Left ventricle myocardium inferior (tissue), 1 donor: ENCODE measurements at regions of chr7 and their contacts with region 1.

Region 1: DNA sequence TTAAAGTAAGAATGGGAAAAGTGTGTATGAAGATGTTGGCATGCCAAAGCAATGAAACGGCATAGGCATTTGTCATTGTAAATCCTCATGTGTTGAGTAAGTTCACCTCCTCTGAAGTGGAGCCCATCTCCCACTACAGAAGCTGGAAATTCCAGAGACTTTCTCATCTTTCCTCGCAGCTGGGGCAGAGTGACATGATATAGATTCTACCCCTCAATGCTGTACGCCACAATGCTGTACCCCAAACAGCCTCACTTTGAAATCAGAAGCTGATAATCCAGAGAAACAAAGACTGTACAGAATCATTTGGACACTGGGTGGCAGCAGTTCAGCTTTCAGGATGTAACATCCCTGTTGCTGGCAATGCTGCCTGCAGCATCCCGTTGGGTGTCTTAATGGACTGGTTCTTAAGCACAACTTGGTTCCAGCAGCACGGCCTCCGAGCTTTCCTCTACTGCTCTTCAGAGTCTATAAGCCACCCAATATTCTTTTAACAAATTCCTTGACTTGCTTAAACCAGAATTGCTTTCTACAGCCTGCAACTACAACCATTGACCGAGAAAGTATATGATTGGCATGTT is 18.8 kb downstream of the ZC3HAV1L start:
- DNase-seq: peak; percentile 36
- H3K4me3 ChIP-seq: no peak overlapping the region
- H3K27ac ChIP-seq: no peak overlapping the region
- H3K4me1 ChIP-seq: no peaks in the 10 kb centered on the region
- H3K27me3 ChIP-seq: no peaks in the 10 kb centered on the region
- CTCF ChIP-seq: peak; percentile 82

Region 2: DNA sequence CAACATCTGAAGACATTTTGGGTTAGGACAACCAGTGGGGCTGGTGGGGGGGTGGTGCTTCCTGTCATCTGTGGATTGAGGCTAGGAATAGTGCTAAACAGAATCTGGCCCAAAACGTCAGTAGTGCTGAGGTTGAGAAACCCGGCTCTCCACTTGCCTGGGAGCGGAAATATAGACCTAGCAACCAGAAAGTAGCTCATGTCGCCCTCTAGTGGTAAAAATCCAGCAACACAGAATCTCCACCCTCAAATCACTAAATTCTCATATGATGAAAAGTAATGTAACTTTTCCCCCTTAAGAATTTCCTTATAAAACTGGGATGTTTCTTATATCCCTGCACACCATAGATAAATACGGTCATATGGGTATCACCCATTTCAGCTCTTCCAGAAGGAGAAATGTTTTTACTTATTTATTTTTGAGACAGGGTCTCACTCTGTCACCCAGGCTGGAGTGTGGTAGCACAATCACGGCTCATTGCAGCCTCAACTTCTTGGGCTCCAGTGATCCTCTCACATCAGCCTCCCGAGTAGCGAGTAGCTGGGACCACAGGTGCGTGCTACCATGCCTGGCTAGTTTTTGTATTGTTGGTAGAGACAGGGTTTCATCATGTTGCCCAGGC is 58.1 kb after region 1 on chr7:
- intact Hi-C with region 1: loop called (anchors 5 kb)
- DNase-seq: peak; percentile 50
- H3K4me3 ChIP-seq: no peak overlapping the region
- H3K27ac ChIP-seq: peak overlapping the region; percentile 51
- H3K4me1 ChIP-seq: peaks cover 17% of the 10 kb centered on the region
- H3K27me3 ChIP-seq: no peaks in the 10 kb centered on the region
- CTCF ChIP-seq: peak; percentile 90